HCT116 (cell line): ENCODE measurements at regions of chr1 and their contacts with region 1.

Region 1: GRCh38 chr1:32025515-32025914 is 11.8 kb downstream of the KHDRBS1 start:
- DNase-seq: no peak
- ATAC-seq: no peak
- H3K4me3 ChIP-seq: no peak overlapping the region
- H3K27ac ChIP-seq: no peak overlapping the region
- H3K4me1 ChIP-seq: no peaks in the 10 kb centered on the region
- H3K27me3 ChIP-seq: no peaks in the 10 kb centered on the region
- CTCF ChIP-seq: no peak
- POLR2A ChIP-seq: no peak
- RAD21 ChIP-seq: no peak

Region 2: DNA sequence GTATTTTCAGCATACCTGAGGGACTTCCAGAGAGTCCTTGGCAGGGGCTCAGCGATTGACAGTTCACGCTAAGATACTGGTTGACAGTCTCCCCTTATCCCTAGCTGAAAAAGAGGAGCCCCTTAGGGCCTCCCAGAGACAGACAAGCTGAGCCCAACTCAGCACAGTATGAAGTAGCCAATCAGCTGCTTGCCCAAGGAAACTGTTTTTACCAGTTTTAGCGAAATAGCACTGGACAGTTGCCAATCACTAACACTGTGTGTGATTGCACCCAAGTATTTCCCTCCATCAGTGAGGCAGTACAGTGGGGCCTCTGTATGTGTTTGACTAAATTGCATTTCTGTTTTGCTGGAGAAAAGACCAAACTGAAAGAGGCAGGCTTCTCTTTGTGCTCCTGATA is 15.2 kb after region 1 on chr1:
- CTCF ChIA-PET with region 1: no interaction called
- POLR2A ChIA-PET with region 1: no interaction called
- RAD21 ChIA-PET with region 1: no interaction called
- intact Hi-C with region 1: no loop called
- DNase-seq: no peak
- ATAC-seq: no peak; the same call in 1 of the 2 replicates
- H3K4me3 ChIP-seq: no peak overlapping the region
- H3K27ac ChIP-seq: no peak overlapping the region
- H3K4me1 ChIP-seq: no peaks in the 10 kb centered on the region
- H3K27me3 ChIP-seq: no peaks in the 10 kb centered on the region
- CTCF ChIP-seq: no peak
- POLR2A ChIP-seq: no peak
- RAD21 ChIP-seq: no peak

Region 3: GRCh38 chr1:32082022-32082421 is 56.5 kb after region 1 on chr1:
- CTCF ChIA-PET with region 1: interaction called, 3 read pairs
- POLR2A ChIA-PET with region 1: no interaction called
- RAD21 ChIA-PET with region 1: interaction called in 1 of 2 experiments, 10 read pairs
- intact Hi-C with region 1: no loop called
- DNase-seq: no peak
- ATAC-seq: no peak
- H3K4me3 ChIP-seq: no peak overlapping the region
- H3K27ac ChIP-seq: no peak overlapping the region
- H3K4me1 ChIP-seq: no peaks in the 10 kb centered on the region
- H3K27me3 ChIP-seq: no peaks in the 10 kb centered on the region
- CTCF ChIP-seq: no peak
- POLR2A ChIP-seq: no peak
- RAD21 ChIP-seq: no peak

Region 4: GRCh38 chr1:32107742-32108661 is 82.5 kb after region 1 on chr1 and contains the start of gene KPNA6:
- CTCF ChIA-PET with region 1: no interaction called
- POLR2A ChIA-PET with region 1: no interaction called
- RAD21 ChIA-PET with region 1: no interaction called
- intact Hi-C with region 1: no loop called
- DNase-seq: peak; percentile 97
- ATAC-seq: peak; percentile 77
- H3K4me3 ChIP-seq: peak within 1 kb of the TSS; percentile 61 to 84
- H3K27ac ChIP-seq: peak within 1 kb of the TSS; percentile 92
- H3K4me1 ChIP-seq: peaks cover 11 to 31% of the 10 kb centered on the region in 2 experiments; a peak in 2 of 4 replicates
- H3K27me3 ChIP-seq: no peaks in the 10 kb centered on the region
- CTCF ChIP-seq: no peak
- POLR2A ChIP-seq: peak; percentile 37
- RAD21 ChIP-seq: no peak
- total RNA-seq, gene KPNA6: 79.9 TPM